Caco-2 (cell line): ENCODE measurements at regions of chr17 and their contacts with region 1.

Region 1: DNA sequence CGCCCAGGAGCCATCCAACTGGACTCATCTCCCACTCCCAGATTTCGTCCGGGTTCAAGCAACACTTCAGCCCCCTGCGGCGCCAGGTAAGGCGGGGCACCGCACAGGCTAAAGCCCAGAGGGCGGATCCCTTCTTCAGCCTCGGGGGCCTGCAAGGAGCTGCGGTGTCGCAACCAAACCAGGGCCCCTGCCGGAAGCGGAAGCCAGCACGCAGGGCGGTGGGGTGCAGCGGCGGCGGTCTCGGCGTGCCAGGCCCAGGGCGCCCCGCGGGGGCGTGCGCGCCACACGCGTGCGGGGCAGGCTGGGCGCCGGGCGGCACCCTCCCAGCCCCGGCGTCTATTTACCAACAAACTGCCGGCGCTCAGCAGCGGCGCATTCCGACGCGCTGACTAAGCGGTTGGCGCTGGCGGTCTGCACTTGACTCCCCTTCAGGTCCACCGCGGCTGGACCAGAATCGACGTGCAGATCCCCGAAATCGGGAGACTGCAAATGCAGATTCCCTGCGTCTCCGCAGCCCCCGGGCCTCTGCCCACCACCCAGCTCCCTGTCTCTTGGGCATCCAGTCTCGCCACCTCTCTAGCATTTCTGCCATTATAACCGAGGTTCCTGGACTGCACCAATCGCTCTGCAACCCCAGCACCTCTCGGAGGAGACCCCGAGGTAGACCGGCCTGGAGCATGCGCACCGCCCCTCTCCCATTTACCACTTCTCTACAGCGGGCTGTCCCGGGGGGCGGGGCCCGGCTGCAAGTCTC is 433 bp upstream of the DLX4 start:
- DNase-seq: peak; percentile 98 to 100
- H3K4me3 ChIP-seq: peak overlapping the region; percentile 44
- H3K4me3 Mint-ChIP-seq: peak overlapping the region; percentile 94
- H3K27ac Mint-ChIP-seq: peak overlapping the region; percentile 97
- H3K4me1 ChIP-seq: peaks cover 5% of the 10 kb centered on the region; the same call in 1 of the 2 replicates
- H3K4me1 Mint-ChIP-seq: peaks cover 6% of the 10 kb centered on the region
- H3K27me3 ChIP-seq: no peaks in the 10 kb centered on the region
- H3K27me3 Mint-ChIP-seq: peaks cover 3% of the 10 kb centered on the region
- CTCF ChIP-seq: peak; percentile 2 to 13

Region 2: DNA sequence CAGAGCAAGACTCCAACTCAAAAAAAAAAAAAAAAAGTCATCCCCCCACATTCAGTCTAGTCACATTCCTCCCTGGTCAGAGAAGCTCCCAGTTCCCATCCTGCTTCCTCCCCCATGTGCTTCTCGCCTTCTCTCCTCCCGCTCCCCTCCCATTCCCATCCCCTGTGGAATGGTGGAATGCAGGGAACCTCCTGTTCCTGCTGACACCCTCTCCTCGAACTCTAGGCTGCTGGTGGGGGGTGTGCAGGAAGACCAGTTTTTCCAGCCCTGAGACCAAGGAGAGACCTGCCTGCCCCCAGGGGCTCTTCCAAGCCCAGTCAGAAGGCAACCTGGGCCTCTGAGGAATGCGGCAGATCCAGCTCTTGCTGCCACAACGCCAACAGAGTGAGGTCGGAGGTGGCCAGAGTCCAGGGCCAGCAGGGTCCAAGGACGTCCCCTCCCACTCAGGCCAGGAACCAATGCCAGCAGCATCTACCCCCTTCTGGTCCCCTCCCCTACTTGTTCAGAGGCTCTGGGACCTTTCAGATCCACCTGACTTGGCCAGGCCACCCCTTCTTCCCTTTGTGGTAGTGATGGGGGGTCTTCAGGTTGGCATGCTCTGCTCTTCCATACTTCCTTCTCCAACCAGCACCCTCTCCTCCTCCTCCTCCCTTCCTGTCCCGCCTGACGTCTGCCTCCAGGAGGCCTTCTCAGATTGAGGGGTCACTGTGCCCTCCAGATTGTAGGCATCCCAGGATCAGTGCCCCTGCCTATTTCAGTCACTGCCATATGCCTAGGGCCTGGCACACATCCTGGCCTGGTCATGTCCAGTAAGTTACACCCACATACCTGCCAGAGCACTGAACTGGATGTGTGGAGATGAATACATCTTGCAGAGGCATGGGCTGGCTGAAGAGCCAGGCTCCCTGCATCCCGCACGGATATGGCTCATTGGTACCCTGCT is 81.2 kb before region 1 on chr17:
- CTCF ChIA-PET with region 1: no interaction called
- POLR2A ChIA-PET with region 1: no interaction called
- intact Hi-C with region 1: loop called (anchors 1 kb)
- DNase-seq: peak; percentile 100
- H3K4me3 ChIP-seq: no peak overlapping the region
- H3K4me3 Mint-ChIP-seq: peak overlapping the region; percentile 59
- H3K27ac Mint-ChIP-seq: peak overlapping the region; percentile 96
- H3K4me1 ChIP-seq: peaks cover 88% of the 10 kb centered on the region
- H3K4me1 Mint-ChIP-seq: peaks cover 75% of the 10 kb centered on the region
- H3K27me3 ChIP-seq: no peaks in the 10 kb centered on the region
- H3K27me3 Mint-ChIP-seq: no peaks in the 10 kb centered on the region
- CTCF ChIP-seq: no peak

Region 3: GRCh38 chr17:50129728-50130558 is 161.4 kb after region 1 on chr17 and contains the start of gene SAMD14:
- CTCF ChIA-PET with region 1: no interaction called
- POLR2A ChIA-PET with region 1: interaction called, 3 read pairs
- intact Hi-C with region 1: loop called (anchors 5 kb)
- DNase-seq: peak; percentile 69 to 82
- H3K4me3 ChIP-seq: peak within 1 kb of the TSS; percentile 50
- H3K4me3 Mint-ChIP-seq: peak within 1 kb of the TSS; percentile 79
- H3K27ac Mint-ChIP-seq: peak within 1 kb of the TSS; percentile 34
- H3K4me1 ChIP-seq: peaks cover 27% of the 10 kb centered on the region
- H3K4me1 Mint-ChIP-seq: peaks cover 27% of the 10 kb centered on the region
- H3K27me3 ChIP-seq: no peaks in the 10 kb centered on the region
- H3K27me3 Mint-ChIP-seq: no peaks in the 10 kb centered on the region
- CTCF ChIP-seq: no peak
- total RNA-seq, gene SAMD14: 2.2 and 3.4 TPM in 2 replicates